ENCODE measurements at regions of chr1 and their contacts with region 1.

Region 1: DNA sequence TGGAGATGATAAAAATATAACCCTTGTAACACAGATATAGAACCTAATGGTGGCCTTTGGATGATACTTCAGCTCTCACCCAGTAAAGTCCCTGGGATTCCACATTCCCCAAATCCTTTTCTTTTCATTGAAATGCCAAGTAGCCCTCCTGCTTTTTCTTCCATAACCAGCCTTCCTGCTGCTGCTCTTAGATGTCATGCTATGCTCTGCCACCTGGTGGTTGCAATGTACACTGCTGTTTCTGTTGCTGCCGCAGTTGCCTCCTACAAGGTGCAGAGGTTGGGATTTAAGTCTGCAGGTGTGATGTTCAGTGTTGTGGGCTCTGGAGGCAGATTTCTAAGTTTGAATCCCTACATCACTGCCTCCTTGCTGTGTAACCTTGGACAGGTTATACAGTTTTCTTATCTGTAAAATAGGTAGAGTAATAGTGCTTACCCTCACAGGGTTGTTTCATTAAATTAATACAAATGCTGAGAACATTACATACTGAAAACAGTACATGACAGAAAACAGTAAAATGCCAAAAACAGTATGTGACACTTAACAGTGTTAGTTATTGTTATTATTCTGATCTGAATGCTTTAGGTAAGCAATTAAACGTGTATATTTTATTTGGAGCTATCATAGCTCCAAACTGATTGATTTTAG is 64.3 kb downstream of the CAMSAP2 start:
- DNase-seq: peak; percentile 53 to 74 (median 70)
- H3K4me3 ChIP-seq: no peak overlapping the region
- H3K4me3 Mint-ChIP-seq: no peak overlapping the region
- H3K27ac ChIP-seq: no peak overlapping the region
- H3K27ac Mint-ChIP-seq: peak overlapping the region in 1 of 7 donors; percentile 61
- H3K4me1 ChIP-seq: no peaks in the 10 kb centered on the region
- H3K4me1 Mint-ChIP-seq: peaks cover 2% of the 10 kb centered on the region
- H3K27me3 ChIP-seq: no peaks in the 10 kb centered on the region
- H3K27me3 Mint-ChIP-seq: peaks cover 0 to 2% (median 0%) of the 10 kb centered on the region in 3 donors
- CTCF ChIP-seq: peak; percentile 87

Region 2: DNA sequence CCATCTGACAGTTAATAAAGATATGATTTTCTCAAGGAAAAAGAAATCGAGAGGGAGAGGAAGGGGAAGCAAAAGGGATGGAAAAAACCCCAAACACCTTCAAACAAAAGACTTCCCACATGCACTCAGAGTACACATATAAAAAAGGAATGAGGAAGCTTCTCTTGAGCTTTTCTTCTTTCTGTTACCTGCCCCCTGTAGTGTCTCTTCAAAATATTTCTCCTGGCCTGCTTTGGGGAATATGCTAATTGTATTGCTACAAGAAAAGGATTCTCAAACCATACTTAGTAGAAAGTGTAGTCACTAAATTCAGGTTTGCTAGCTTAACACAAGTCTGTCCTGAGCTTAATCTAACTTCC is 241.2 kb before region 1 on chr1:
- intact Hi-C with region 1: loop called in 1 of 2 experiments (anchors 10 kb)
- DNase-seq: no peak
- H3K4me3 ChIP-seq: no peak overlapping the region
- H3K4me3 Mint-ChIP-seq: no peak overlapping the region
- H3K27ac ChIP-seq: no peak overlapping the region
- H3K27ac Mint-ChIP-seq: peak overlapping the region in 1 of 7 donors; percentile 23
- H3K4me1 ChIP-seq: no peaks in the 10 kb centered on the region
- H3K4me1 Mint-ChIP-seq: no peaks in the 10 kb centered on the region
- H3K27me3 ChIP-seq: no peaks in the 10 kb centered on the region
- H3K27me3 Mint-ChIP-seq: no peaks in the 10 kb centered on the region
- CTCF ChIP-seq: no peak

Measured in CD14-positive monocyte (primary cell).